ENCODE measurements at regions of chr2 and their contacts with region 1.

Region 1: GRCh38 chr2:208929139-208929864 is 494.5 kb upstream of the MAP2 start:
- DNase-seq: no peak
- H3K4me3 ChIP-seq: no peak overlapping the region
- CTCF ChIP-seq: no peak

Region 2: GRCh38 chr2:208847651-208848050 is 81.7 kb before region 1 on chr2:
- in situ Hi-C with region 1: loop called (anchors 5 kb)
- DNase-seq: no peak
- H3K4me3 ChIP-seq: no peak overlapping the region
- CTCF ChIP-seq: no peak

Region 3: DNA sequence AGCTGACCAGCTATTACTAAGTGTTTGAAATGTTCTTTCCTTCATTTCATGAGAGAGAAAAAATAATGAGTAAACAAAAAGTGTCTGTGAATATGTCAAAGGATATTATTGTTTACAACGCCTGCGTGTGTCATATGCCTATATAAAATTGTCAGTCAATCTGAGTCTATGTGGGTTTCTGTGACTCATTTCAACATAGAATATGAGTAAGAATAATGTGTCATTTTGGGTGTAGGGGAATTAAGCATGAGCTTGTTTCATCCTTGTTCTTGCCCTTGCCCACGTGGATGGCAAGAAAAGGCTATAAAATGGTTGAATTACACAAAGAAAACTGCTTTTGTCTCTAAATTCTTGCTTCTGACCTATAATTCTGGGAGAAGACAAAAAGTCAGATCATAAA is 56.7 kb before region 1 on chr2:
- in situ Hi-C with region 1: loop called (anchors 5 kb)
- DNase-seq: no peak
- H3K4me3 ChIP-seq: no peak overlapping the region
- CTCF ChIP-seq: no peak